Breast epithelium (tissue), 4 donors: ENCODE measurements at regions of chr3 and their contacts with region 1.

Region 1: DNA sequence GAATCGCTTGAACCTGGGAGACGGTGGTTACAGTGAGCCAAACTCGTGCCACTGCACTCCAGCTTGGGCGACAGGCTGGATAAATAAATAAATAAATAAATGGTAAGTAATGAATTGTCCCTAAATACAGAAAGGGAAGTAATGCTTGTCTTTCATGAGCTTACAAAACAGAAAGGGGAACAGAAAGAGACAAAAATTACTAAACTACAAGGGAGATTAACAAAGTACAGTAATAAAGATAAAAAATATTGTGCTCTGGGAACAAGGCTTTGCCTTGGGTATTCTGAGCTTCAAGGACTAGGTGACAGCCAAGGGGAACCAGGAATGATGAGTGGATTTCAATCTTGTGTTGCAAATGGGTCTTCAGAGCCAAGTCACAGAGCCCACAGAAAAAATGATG is 9.2 kb upstream of the HLTF start:
- DNase-seq: no peak
- H3K4me3 ChIP-seq: no peak overlapping the region
- H3K27ac ChIP-seq: no peak overlapping the region
- H3K4me1 ChIP-seq: no peaks in the 10 kb centered on the region
- H3K27me3 ChIP-seq: no peaks in the 10 kb centered on the region
- CTCF ChIP-seq: no peak
- POLR2A ChIP-seq: no peak

Region 2: DNA sequence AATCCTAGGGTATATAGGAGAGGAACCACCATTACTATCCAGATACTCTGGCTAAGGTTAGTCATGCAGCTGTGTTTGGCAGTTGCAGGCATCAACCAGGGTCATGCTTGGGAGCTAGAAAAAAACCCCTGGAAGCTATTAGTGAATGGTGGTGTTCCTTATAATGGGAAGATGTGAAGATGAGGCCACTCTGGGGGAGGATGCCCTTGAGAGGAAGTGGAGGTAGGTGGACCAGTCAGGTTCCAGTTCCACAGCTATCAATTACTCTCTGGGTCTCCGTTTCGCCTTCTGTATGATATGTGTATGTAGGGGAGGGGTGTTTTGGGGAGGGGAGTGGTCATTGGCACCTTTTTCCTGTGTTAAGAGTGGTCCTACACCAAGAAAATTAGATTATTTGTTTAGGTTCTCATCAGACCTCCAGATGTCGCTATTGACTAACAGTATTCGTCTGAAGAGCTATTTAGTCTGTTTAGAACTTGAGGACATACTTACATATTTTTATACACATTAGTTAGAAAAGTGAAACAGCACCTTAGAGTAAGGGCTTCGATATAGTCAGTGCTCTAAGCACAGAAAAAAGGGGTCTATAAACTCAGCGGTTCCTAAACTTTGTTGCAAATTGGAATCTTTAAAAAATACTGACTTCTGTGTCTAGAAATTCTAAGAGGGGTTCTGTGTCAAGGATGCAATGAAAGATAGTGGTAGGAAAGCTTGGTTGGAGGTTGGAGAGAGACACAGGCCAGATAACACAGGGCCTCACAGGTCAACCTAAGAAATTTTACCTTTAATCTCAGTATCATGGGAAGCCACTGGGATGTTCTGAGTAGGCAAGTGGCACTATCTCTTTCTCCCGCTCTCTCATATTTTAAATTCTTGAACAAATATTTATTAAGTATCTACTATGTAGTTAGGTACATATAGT is 24.8 kb after region 1 on chr3:
- intact Hi-C with region 1: loop called (anchors 2 kb)
- DNase-seq: no peak
- H3K4me3 ChIP-seq: no peak overlapping the region
- H3K27ac ChIP-seq: no peak overlapping the region
- H3K4me1 ChIP-seq: no peaks in the 10 kb centered on the region
- H3K27me3 ChIP-seq: no peaks in the 10 kb centered on the region
- CTCF ChIP-seq: peak; percentile 25 to 71 (median 61)
- POLR2A ChIP-seq: no peak